ENCODE measurements at regions of chrX and their contacts with region 1.

Region 1: GRCh38 chrX:120736989-120737388 is 107.1 kb upstream of the C1GALT1C1 start:
- DNase-seq: peak in 1 of 2 experiments; percentile 83
- H3K4me3 ChIP-seq: peak overlapping the region; percentile 40; the same call in 1 of the 2 replicates
- H3K27ac ChIP-seq: peak overlapping the region; percentile 99
- H3K4me1 ChIP-seq: peaks cover 79% of the 10 kb centered on the region
- H3K27me3 ChIP-seq: no peaks in the 10 kb centered on the region
- CTCF ChIP-seq: no peak

Region 2: GRCh38 chrX:120457766-120458180 is 279.2 kb before region 1 on chrX:
- CTCF ChIA-PET with region 1: interaction called, 15 read pairs
- POLR2A ChIA-PET with region 1: no interaction called
- intact Hi-C with region 1: no loop called
- DNase-seq: no peak
- H3K4me3 ChIP-seq: no peak overlapping the region
- H3K27ac ChIP-seq: no peak overlapping the region
- H3K4me1 ChIP-seq: no peaks in the 10 kb centered on the region
- H3K27me3 ChIP-seq: no peaks in the 10 kb centered on the region
- CTCF ChIP-seq: no peak

Region 3: DNA sequence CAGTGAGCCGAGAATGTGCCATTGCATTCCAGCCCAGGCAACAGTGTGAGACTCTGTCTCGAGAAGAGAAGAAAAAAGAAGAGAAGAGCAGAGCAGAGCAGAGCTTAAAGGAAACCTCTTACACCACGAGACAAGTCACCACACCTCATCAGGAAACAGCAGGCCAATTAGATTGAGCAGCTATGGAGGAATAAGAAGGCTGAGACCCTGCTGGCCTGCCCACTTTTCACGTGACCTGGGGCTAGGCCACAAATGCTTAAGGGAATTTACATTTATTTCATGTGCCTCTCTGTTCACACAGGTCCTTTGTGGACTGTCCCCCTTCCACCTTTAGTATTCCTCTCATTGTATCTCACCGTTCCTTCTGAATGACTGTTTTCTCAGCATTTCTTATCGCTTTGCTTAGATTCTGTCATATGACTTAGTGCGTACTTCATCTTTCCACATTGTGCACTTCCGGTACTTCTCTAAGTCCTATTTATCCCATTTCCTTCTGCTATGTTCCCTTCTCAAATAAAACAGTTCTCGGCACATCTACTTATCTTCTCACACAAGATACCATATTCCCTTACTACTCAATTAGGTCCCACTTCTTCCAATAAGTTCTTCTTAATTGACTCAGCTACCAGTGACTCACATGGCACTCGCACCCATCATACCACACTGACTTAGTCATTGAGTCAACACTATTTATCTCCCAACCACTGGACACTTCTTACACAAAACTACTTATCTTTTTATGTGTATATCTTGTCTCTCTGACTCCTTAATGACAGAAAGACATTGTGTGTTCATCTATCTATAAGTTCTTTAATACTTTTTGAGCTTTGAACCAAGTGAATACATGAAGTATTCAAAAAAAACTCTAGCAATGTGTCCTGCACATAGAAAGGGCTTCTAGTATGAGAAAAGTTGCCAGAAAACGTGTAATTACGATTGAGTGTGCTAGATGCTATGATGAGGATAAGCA is 187.2 kb before region 1 on chrX:
- CTCF ChIA-PET with region 1: no interaction called
- POLR2A ChIA-PET with region 1: no interaction called
- intact Hi-C with region 1: loop called (anchors 1 kb)
- DNase-seq: peak; percentile 58 to 95
- H3K4me3 ChIP-seq: peak overlapping the region; percentile 41
- H3K27ac ChIP-seq: peak overlapping the region; percentile 93
- H3K4me1 ChIP-seq: peaks cover 63% of the 10 kb centered on the region
- H3K27me3 ChIP-seq: no peaks in the 10 kb centered on the region
- CTCF ChIP-seq: no peak

Region 4: DNA sequence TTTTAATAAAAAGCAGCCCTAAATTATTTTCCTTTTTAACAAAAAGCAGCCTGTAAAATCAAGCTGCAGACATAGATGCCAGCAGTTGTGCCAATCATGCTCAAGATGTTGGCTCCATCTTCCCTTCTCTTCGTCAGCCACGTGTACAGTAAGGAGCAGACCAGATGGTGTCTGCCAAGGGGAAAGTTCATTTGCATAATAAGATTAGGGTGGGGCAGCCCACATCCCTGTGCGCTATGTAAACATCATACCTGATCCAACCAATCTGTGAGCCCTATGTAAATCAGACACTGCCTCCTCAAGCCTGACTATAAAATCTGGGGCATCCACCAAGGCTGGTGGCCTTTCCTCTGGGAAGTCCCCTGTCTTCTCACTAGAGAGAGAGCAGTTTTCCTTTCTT is 84.0 kb before region 1 on chrX:
- CTCF ChIA-PET with region 1: no interaction called
- POLR2A ChIA-PET with region 1: no interaction called
- intact Hi-C with region 1: no loop called
- DNase-seq: no peak
- H3K4me3 ChIP-seq: no peak overlapping the region
- H3K27ac ChIP-seq: no peak overlapping the region
- H3K4me1 ChIP-seq: peaks cover 10% of the 10 kb centered on the region; the same call in 1 of the 2 replicates
- H3K27me3 ChIP-seq: no peaks in the 10 kb centered on the region
- CTCF ChIP-seq: no peak

Region 5: GRCh38 chrX:120672390-120672789 is 64.6 kb before region 1 on chrX:
- CTCF ChIA-PET with region 1: no interaction called
- POLR2A ChIA-PET with region 1: interaction called, 13 read pairs
- intact Hi-C with region 1: loop called (anchors 2 kb)
- DNase-seq: peak; percentile 50 to 89
- H3K4me3 ChIP-seq: no peak overlapping the region
- H3K27ac ChIP-seq: peak overlapping the region; percentile 94
- H3K4me1 ChIP-seq: peaks cover 29% of the 10 kb centered on the region
- H3K27me3 ChIP-seq: no peaks in the 10 kb centered on the region
- CTCF ChIP-seq: no peak

Region 6: GRCh38 chrX:120797188-120797851 is 60.3 kb after region 1 on chrX:
- CTCF ChIA-PET with region 1: no interaction called
- POLR2A ChIA-PET with region 1: no interaction called
- intact Hi-C with region 1: no loop called
- DNase-seq: no peak
- H3K4me3 ChIP-seq: no peak overlapping the region
- H3K27ac ChIP-seq: no peak overlapping the region
- H3K4me1 ChIP-seq: peaks cover 9% of the 10 kb centered on the region
- H3K27me3 ChIP-seq: no peaks in the 10 kb centered on the region
- CTCF ChIP-seq: no peak

Region 7: GRCh38 chrX:122268353-122268752 is 1531.4 kb after region 1 on chrX:
- CTCF ChIA-PET with region 1: no interaction called
- POLR2A ChIA-PET with region 1: no interaction called
- intact Hi-C with region 1: no loop called
- DNase-seq: no peak
- H3K4me3 ChIP-seq: no peak overlapping the region
- H3K27ac ChIP-seq: no peak overlapping the region
- H3K4me1 ChIP-seq: no peaks in the 10 kb centered on the region
- H3K27me3 ChIP-seq: no peaks in the 10 kb centered on the region
- CTCF ChIP-seq: no peak